Ascending aorta (tissue), 2 donors: ENCODE measurements at regions of chr10 and their contacts with region 1.

Region 1: DNA sequence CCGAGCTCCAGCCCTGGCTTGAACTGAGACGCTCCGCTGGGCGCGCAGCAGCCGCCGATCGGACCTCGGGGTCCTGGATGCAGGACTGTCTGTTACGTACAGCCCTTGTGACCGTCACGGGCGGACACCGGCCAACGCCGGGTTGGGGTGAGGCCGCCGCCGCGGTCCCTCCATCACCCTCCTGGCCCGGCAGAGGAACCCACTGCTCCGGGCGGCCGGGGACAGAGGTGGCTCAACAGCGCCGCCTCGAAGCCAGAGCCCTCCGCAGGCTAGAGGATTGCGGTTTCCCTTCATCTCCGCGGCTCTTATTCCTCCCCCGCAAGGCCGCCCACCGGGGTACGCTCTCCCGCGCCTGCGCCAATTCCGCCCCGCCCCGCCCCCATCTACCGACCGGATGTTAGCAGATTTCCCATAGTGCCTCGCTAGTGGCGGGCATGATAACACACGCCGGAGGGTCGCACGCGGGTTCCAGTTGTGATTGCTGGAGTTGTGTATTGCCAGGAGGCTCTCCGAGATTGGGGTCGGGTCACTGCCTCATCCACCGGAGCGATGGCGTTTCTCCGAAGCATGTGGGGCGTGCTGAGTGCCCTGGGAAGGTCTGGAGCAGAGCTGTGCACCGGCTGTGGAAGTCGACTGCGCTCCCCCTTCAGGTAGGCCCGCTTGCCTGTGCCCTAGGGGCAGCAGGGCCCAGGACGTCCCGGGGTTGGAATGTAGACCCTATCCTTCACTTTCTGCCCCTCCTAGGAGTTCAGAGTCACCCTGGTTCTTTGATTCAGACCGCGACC is at the start of gene TFAM:
- DNase-seq: peak; percentile 84 to 98
- H3K4me3 ChIP-seq: peak within 1 kb of the TSS; percentile 67
- H3K27ac ChIP-seq: peak within 1 kb of the TSS; percentile 88 to 93
- H3K4me1 ChIP-seq: peaks cover 0 to 3% of the 10 kb centered on the region in 2 donors
- H3K27me3 ChIP-seq: no peaks in the 10 kb centered on the region
- CTCF ChIP-seq: peak; percentile 39 to 61 (median 53)
- total RNA-seq, gene TFAM: 3.4 TPM

Region 2: GRCh38 chr10:58299580-58299979 is 85.6 kb before region 1 on chr10:
- intact Hi-C with region 1: loop called (anchors 2 kb)
- DNase-seq: no peak
- H3K4me3 ChIP-seq: no peak overlapping the region
- H3K27ac ChIP-seq: no peak overlapping the region
- H3K4me1 ChIP-seq: no peaks in the 10 kb centered on the region
- H3K27me3 ChIP-seq: no peaks in the 10 kb centered on the region
- CTCF ChIP-seq: peak; percentile 48 to 73 (median 57)

Region 3: GRCh38 chr10:58334817-58335305 is 50.3 kb before region 1 on chr10 and contains the start of gene UBE2D1:
- intact Hi-C with region 1: loop called (anchors 1 kb)
- DNase-seq: peak; percentile 45 to 91
- H3K4me3 ChIP-seq: peak within 1 kb of the TSS; percentile 96 to 99
- H3K27ac ChIP-seq: peak within 1 kb of the TSS; percentile 86 to 90
- H3K4me1 ChIP-seq: peaks cover 0 to 8% of the 10 kb centered on the region in 2 donors
- H3K27me3 ChIP-seq: no peaks in the 10 kb centered on the region
- CTCF ChIP-seq: peak in 2 of 3 experiments; percentile 6 to 10
- total RNA-seq, gene UBE2D1: 4.2 TPM

Region 4: GRCh38 chr10:58531084-58531695 is 146.0 kb after region 1 on chr10:
- intact Hi-C with region 1: no loop called
- DNase-seq: no peak
- H3K4me3 ChIP-seq: no peak overlapping the region
- H3K27ac ChIP-seq: no peak overlapping the region
- H3K4me1 ChIP-seq: no peaks in the 10 kb centered on the region
- H3K27me3 ChIP-seq: no peaks in the 10 kb centered on the region
- CTCF ChIP-seq: peak; percentile 44 to 57 (median 50)

Region 5: DNA sequence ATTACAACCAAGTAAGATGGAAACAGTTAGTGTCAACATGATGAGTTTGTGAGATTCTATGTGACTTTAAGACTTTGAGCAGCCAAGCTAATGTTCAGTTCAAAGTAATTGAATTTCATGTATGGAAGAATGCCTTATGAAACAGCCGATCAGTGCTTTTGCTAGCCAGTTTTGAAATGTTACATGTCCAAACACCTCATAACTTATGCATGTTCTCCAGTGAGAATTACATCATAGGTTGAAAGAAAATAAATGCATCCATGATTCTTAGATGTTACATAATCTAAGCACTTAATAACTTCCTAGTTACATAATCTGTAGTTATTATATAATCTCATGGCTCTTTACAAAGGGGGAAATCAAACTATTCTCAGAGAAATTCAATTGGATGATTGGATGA is 338.8 kb after region 1 on chr10:
- intact Hi-C with region 1: no loop called
- DNase-seq: no peak
- H3K4me3 ChIP-seq: no peak overlapping the region
- H3K27ac ChIP-seq: no peak overlapping the region
- H3K4me1 ChIP-seq: peaks cover 0 to 9% of the 10 kb centered on the region in 2 donors
- H3K27me3 ChIP-seq: no peaks in the 10 kb centered on the region
- CTCF ChIP-seq: no peak